Testis (tissue), 5 donors: ENCODE measurements at regions of chr5 and their contacts with region 1.

Region 1: GRCh38 chr5:4027088-4027734 is 431.6 kb downstream of the IRX1 start:
- DNase-seq: no peak
- H3K4me3 ChIP-seq: no peak overlapping the region
- H3K27ac ChIP-seq: no peak overlapping the region
- H3K4me1 ChIP-seq: no peaks in the 10 kb centered on the region
- H3K27me3 ChIP-seq: no peaks in the 10 kb centered on the region
- CTCF ChIP-seq: no peak
- POLR2A ChIP-seq: no peak

Region 2: GRCh38 chr5:4048398-4048797 is 21.2 kb after region 1 on chr5:
- intact Hi-C with region 1: loop called (anchors 2 kb)
- DNase-seq: no peak
- H3K4me3 ChIP-seq: no peak overlapping the region
- H3K27ac ChIP-seq: no peak overlapping the region
- H3K4me1 ChIP-seq: no peaks in the 10 kb centered on the region
- H3K27me3 ChIP-seq: no peaks in the 10 kb centered on the region
- CTCF ChIP-seq: no peak
- POLR2A ChIP-seq: no peak